ENCODE measurements at regions of chr17 and their contacts with region 1.

Region 1: DNA sequence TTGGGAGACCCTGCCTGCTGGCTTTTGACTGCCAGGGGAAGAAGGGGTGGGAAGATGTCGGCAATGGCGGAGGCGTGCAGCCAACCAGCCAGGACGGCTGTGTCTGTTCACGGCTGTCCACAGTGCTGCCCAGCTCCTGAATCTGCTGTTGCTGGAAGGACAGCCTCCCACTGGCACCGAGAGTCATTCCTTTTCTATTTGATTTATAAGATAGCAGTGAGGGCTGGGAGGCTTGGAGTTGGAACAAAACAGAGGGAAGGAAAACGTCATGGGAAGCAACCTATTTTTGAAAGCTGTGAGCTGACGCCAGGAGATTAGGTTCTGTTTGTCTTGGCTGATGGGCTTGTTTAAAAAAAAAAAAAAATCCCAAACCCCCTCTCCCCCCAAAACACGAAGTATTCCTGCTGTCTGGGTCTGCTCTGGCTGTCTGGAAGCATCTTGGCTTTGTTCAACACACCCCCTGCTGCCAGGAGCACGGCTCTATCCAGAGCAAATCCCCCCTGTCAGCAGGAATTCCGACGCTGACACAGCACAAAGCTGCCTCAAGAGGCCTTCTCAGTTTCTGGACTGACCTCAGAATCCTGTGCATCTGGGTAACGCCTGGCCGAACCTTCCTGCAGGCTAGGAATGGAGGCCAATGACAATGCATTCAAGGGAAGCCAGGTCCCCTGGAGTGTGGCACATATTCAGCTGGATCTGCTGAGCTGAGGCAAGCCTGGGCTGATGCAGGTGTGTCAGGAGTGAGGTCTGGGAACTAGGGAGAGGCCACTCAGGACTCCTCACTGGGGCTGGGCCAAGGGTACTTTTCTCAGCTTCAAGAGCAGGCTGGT is 41.0 kb upstream of the SREBF1 start:
- DNase-seq: peak; percentile 64
- H3K4me3 ChIP-seq: no peak overlapping the region
- H3K27me3 ChIP-seq: no peaks in the 10 kb centered on the region
- CTCF ChIP-seq: peak; percentile 25

Region 2: DNA sequence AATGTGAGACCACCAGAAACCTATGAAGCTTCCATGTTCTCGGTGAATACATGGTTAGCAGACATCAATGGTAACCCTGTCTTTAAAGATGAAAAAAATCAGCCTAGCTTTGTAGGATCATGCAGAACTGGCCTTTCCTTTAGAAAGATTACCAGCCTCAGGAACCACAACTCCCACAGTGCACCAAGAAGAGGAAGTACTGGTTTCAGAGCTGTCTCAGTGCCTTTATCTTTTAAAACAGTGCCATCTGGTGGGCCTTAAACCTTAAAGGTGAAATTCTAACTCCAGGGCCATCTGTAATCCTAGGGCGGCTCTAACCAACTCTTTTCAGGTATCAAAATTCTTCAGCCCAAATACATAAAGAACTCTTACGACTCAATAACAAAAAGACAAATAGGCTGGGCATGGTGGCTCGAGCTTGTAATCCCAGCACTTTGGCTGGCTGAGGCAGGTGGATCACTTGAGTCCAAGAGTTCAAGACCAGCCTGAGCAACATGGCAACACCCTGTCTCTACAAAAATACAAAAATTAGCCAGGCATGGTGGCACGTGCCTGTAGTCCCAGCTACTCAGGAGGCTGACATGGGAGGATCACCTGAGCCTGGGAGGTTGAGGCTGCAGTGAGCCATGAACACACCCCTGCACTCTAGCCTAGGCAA is 155.8 kb after region 1 on chr17:
- CTCF ChIA-PET with region 1: interaction called, 18 read pairs
- POLR2A ChIA-PET with region 1: no interaction called
- DNase-seq: no peak
- H3K4me3 ChIP-seq: no peak overlapping the region
- H3K27me3 ChIP-seq: no peaks in the 10 kb centered on the region
- CTCF ChIP-seq: peak; percentile 52

Measured in BJ (cell line).